Esophagus muscularis mucosa (tissue), 4 donors: ENCODE measurements at regions of chr1 and their contacts with region 1.

Region 1: GRCh38 chr1:19715334-19716203 is 50.9 kb downstream of the HTR6 start:
- DNase-seq: peak; percentile 97
- H3K4me3 ChIP-seq: no peak overlapping the region
- H3K27ac ChIP-seq: no peak overlapping the region
- H3K4me1 ChIP-seq: peaks cover 0 to 14% (median 11%) of the 10 kb centered on the region in 4 donors
- H3K27me3 ChIP-seq: no peaks in the 10 kb centered on the region
- CTCF ChIP-seq: peak; percentile 82 to 92 (median 91)
- EP300 ChIP-seq: no peak
- POLR2A ChIP-seq: no peak

Region 2: GRCh38 chr1:19762175-19762779 is 46.7 kb after region 1 on chr1:
- intact Hi-C with region 1: loop called (anchors 5 kb)
- DNase-seq: no peak
- H3K4me3 ChIP-seq: no peak overlapping the region
- H3K27ac ChIP-seq: no peak overlapping the region
- H3K4me1 ChIP-seq: peaks cover 0 to 16% (median 14%) of the 10 kb centered on the region in 4 donors
- H3K27me3 ChIP-seq: no peaks in the 10 kb centered on the region
- CTCF ChIP-seq: peak; percentile 51 to 71 (median 61)
- EP300 ChIP-seq: no peak
- POLR2A ChIP-seq: no peak

Region 3: GRCh38 chr1:19811206-19811851 is 95.8 kb after region 1 on chr1:
- intact Hi-C with region 1: loop called (anchors 5 kb)
- DNase-seq: no peak
- H3K4me3 ChIP-seq: no peak overlapping the region
- H3K27ac ChIP-seq: no peak overlapping the region
- H3K4me1 ChIP-seq: no peaks in the 10 kb centered on the region
- H3K27me3 ChIP-seq: no peaks in the 10 kb centered on the region
- CTCF ChIP-seq: peak; percentile 41 to 66 (median 58)
- EP300 ChIP-seq: no peak
- POLR2A ChIP-seq: no peak